Activated T-helper 1 cell treated with anti-CD3 and anti-CD28 coated beads, Interleukin-12 subunit alpha, Interleukin-12 subunit beta, Interleukin-2, Interleukin-4 antibody, amounts not matched to agents 30 ng/mL and 10 ng/mL and 1 ng/mL, durations not matched to agents 14 hours and 24 hours and 36 hours (primary cell): ENCODE measurements at regions of chr12 and their contacts with region 1.

Region 1: GRCh38 chr12:6493497-6494257 is at the start of gene NCAPD2:
- DNase-seq: peak; percentile 96
- H3K4me3 Mint-ChIP-seq: peak within 1 kb of the TSS; percentile 97
- H3K27ac Mint-ChIP-seq: peak within 1 kb of the TSS; percentile 97
- H3K4me1 Mint-ChIP-seq: peaks cover 33% of the 10 kb centered on the region
- H3K27me3 Mint-ChIP-seq: peaks cover 3% of the 10 kb centered on the region
- total RNA-seq, gene NCAPD2: 91.6 and 93.4 TPM in 2 replicates

Region 2: DNA sequence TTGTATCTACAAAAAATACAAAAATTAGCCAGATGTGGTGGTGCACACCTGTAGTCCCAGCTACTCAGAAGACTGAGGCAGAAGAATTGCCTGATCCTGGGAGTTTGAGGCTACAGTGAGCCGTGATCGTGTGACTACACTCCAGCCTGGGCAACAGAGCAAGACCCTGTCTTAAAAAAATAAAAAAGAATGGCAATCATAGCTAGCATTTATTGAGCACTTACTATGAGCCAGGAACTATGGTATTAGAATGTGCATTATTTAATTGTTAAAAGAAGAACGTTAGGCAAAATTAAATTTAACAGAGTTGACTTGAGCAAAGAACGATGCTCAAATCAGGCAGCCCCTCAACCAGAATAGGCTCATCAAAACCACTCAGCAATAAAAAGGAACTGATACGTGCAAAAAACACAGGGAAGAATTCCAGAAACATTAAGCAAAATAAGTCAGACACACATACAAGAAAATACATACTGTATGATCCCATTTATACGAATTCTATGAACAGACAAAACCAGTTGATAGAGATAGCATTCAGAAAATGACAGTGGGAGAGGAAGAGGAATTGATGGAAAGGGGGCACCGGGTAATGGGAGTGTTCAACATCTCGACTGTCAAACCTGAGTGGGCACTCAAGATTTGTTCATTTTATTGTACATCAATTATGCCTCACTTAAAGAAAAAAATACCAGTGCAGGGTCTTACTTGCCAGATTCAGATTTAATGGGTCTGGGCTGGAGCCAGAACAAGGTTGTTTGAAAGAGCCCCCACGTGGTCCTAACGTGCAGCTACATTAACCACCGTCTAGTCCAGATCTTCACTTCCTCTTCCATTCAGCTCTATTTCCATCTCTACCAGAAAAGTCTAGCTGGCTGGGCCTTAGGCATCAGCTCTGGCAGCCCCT is 126.4 kb before region 1 on chr12:
- intact Hi-C with region 1: loop called (anchors 2 kb)
- DNase-seq: no peak
- H3K4me3 Mint-ChIP-seq: no peak overlapping the region
- H3K27ac Mint-ChIP-seq: peak overlapping the region; percentile 3
- H3K4me1 Mint-ChIP-seq: peaks cover 20% of the 10 kb centered on the region
- H3K27me3 Mint-ChIP-seq: no peaks in the 10 kb centered on the region

Region 3: DNA sequence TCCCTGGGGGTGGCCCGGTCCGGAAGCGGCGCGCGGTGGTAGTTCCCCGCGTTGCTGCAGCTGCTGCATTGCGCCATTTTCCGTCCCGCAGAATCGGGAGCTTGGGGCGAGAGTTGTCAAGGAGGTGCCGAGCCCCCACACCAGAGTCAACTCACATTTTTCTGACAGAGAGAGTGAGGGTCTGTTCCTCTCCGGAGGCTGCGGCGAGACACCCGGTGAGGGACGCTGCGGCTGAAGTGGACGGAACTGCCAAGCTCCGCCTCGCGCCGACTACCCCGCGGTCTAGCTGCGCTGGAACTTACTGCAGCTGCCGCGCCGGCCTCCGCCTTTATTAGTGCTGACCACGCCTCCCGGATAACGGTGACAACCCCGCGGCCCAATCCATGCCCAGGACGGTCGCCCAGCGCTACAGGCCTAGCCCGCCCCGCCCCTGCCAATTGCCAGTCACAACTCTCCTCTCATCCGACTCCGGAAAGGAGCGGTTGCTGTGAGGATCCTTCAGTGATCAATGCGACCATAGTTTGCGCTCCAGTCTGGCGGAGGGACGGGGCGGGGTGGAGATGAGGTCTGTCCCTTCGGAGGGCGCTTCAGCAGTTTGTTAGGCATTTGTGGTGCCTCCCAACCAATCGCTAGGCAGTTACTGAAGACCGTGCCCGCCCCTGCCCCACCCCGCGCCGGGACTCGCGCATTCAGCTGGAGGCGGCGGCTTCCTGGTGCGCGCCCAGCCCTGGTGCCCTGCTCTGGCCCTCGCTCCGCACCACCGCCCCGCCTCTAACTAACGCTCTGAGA is 23.1 kb before region 1 on chr12 and contains the start of gene VAMP1:
- intact Hi-C with region 1: loop called (anchors 1 kb)
- DNase-seq: peak; percentile 97
- H3K4me3 Mint-ChIP-seq: peak within 1 kb of the TSS; percentile 93
- H3K27ac Mint-ChIP-seq: peak within 1 kb of the TSS; percentile 85
- H3K4me1 Mint-ChIP-seq: peaks cover 57% of the 10 kb centered on the region
- H3K27me3 Mint-ChIP-seq: peaks cover 1% of the 10 kb centered on the region
- total RNA-seq, gene VAMP1: 49.7 and 52.8 TPM in 2 replicates

Region 4: DNA sequence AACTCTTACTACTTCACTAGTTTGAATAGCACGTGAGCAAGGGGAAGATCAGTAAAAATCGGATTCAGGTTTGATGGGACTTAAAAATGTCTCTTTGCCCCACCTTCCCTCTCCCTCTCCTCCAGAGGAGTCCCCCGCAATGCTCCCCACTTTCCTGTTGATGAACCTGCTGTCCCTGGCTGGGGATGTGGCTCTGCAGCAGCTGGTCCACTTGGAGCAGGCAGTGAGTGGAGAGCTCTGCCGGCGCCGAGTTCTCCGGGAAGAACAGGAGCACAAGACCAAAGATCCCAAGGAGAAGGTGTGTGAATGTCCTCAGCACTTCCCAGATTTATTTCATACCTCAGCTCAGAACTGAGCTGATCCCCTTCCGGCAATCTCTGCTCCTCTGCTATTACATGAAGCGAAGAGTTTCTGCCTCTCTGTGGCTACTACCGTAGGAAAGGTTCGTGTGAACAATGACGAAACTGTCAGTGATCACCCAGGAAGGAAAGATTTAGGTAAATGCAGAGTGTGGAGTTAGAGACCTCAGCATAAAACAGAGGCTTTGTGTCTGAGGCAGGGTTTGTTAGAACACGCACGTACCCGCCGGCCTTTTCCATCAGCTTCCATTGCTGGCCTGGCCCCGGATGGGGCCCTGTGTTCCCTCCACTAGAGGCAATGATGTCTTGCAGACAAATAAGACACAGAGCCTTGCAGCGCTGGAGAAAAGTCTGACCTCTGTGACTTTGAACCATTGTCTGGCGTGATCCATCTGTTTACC is 33.3 kb after region 1 on chr12:
- intact Hi-C with region 1: no loop called
- DNase-seq: no peak
- H3K4me3 Mint-ChIP-seq: no peak overlapping the region
- H3K27ac Mint-ChIP-seq: no peak overlapping the region
- H3K4me1 Mint-ChIP-seq: peaks cover 21% of the 10 kb centered on the region
- H3K27me3 Mint-ChIP-seq: no peaks in the 10 kb centered on the region

Region 5: GRCh38 chr12:6662906-6663742 is 169.4 kb after region 1 on chr12 and contains the start of gene ING4:
- intact Hi-C with region 1: loop called (anchors 1 kb)
- DNase-seq: peak; percentile 95
- H3K4me3 Mint-ChIP-seq: peak within 1 kb of the TSS; percentile 89
- H3K27ac Mint-ChIP-seq: peak within 1 kb of the TSS; percentile 91
- H3K4me1 Mint-ChIP-seq: peaks cover 30% of the 10 kb centered on the region
- H3K27me3 Mint-ChIP-seq: no peaks in the 10 kb centered on the region
- total RNA-seq, gene ING4: 14.6 and 15.0 TPM in 2 replicates

Region 6: DNA sequence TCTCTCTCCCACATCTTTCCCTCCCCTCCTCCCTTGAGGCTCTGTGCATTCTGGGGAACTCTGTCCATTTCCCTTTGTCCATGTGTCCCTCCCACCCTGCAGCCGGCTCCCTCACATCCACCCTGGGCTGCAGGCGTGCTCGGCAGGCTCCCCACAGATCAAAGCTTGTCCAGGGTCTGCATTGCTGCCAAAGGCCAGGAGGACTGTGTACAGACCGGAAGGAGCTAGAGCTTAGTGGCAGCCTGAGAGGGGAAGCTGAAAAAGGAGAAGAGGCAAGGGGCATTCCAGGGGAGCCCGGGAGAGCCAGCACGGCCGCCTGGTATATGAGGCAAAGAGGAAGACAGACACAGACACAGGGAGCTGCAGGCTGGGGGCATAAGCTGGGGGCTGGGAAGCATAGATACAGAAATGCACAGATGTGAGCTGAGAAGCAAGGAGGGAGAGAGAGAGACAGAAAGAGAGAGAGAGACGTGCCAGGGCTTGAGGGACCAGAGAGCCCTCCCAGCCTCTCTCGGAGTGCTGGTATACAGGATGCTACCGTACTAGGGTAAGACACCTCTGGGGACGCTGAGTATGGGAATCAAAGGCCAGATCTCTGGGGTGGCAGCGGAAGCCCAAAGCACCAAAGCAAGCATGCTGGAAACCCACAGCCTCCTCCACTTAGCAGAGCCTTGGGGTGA is 299.0 kb after region 1 on chr12:
- intact Hi-C with region 1: loop called (anchors 10 kb)
- DNase-seq: peak; percentile 40
- H3K4me3 Mint-ChIP-seq: peak overlapping the region; percentile 94
- H3K27ac Mint-ChIP-seq: peak overlapping the region; percentile 87
- H3K4me1 Mint-ChIP-seq: peaks cover 65% of the 10 kb centered on the region
- H3K27me3 Mint-ChIP-seq: no peaks in the 10 kb centered on the region

Region 7: DNA sequence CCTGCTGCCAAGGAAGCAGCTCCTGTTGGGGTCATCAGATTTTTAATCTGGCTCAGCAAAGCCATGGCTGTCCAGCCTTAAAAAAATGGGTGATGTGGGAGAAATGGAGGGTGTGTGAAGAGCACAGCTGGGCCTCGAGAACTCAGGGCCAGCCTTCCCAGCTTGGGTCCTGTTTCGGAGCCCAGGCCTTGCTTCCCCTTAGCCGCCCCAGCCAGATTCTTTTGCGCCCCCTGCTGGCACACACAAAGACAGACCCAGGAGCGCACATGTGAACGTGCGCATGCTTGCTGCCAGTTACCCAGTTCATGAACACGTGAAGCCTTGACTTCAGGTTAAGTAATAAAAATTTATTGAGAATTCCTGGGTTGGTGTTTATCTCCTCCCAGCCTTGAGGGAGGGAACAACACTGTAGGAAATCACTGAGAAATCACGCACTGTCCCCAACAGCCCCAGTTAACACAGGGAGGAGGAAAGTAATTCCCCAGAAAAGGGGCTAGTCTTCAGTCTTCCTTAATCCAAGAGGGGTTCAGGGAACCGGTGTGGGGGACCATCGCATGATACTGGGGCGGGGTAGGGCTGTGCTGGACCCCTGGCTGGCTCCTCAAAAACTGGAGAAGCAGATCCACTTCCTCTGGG is 471.5 kb after region 1 on chr12:
- intact Hi-C with region 1: loop called (anchors 1 kb)
- DNase-seq: peak; percentile 78
- H3K4me3 Mint-ChIP-seq: no peak overlapping the region
- H3K27ac Mint-ChIP-seq: peak overlapping the region; percentile 90
- H3K4me1 Mint-ChIP-seq: peaks cover 59% of the 10 kb centered on the region
- H3K27me3 Mint-ChIP-seq: no peaks in the 10 kb centered on the region

Region 8: GRCh38 chr12:7092229-7092985 is 598.7 kb after region 1 on chr12 and contains the start of gene C1R:
- intact Hi-C with region 1: no loop called
- DNase-seq: peak; percentile 51
- H3K4me3 Mint-ChIP-seq: peak within 1 kb of the TSS; percentile 80
- H3K27ac Mint-ChIP-seq: peak within 1 kb of the TSS; percentile 0
- H3K4me1 Mint-ChIP-seq: peaks cover 8% of the 10 kb centered on the region
- H3K27me3 Mint-ChIP-seq: peaks cover 6% of the 10 kb centered on the region
- total RNA-seq, gene C1R: 1.7 and 2.0 TPM in 2 replicates